ENCODE measurements at regions of chr10 and their contacts with region 1.

Region 1: GRCh38 chr10:112389147-112389822 is 15.4 kb downstream of the ACSL5 start:
- DNase-seq: peak; percentile 90
- H3K4me3 Mint-ChIP-seq: peak overlapping the region; percentile 32
- H3K27ac Mint-ChIP-seq: peak overlapping the region; percentile 85
- H3K4me1 Mint-ChIP-seq: peaks cover 70% of the 10 kb centered on the region
- H3K27me3 Mint-ChIP-seq: no peaks in the 10 kb centered on the region

Region 2: DNA sequence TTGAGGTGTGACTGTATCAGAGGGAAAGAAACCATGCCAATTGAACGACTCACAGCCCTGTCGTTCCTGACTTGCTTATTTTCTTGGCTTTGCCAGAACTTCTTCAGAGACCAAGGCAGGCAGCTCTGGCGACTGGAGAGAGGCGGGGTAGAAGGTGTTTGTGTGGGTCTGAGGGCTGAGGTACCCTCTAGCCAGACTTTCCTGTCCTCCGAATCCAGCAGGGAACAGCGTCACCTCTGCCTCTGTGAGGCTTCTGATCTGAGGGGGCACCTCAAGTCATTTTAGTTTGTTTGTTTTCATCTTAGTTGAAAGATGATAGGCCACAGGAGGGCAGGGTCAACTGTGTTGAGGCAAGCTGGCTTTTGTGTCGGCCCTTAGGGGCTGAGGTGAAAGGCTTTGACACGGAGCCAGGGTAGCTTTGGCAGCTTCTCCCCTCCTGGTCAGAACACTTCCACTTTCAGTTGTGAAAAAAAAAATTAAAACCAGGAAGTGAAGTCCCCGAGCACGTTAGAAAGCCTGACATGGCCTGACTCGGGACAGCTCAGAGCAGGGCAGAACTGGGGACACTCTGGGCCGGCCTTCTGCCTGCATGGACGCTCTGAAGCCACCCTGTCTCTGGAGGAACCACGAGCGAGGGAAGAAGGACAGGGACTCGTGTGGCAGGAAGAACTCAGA is 13.4 kb before region 1 on chr10:
- CTCF ChIA-PET with region 1: interaction called, 8 read pairs
- intact Hi-C with region 1: loop called (anchors 1 kb)
- DNase-seq: peak; percentile 49
- H3K4me3 Mint-ChIP-seq: peak overlapping the region; percentile 97
- H3K27ac Mint-ChIP-seq: peak overlapping the region; percentile 99
- H3K4me1 Mint-ChIP-seq: peaks cover 55% of the 10 kb centered on the region
- H3K27me3 Mint-ChIP-seq: no peaks in the 10 kb centered on the region

Region 3: GRCh38 chr10:112461029-112461887 is 72.0 kb after region 1 on chr10:
- CTCF ChIA-PET with region 1: no interaction called
- intact Hi-C with region 1: loop called (anchors 1 kb)
- DNase-seq: peak; percentile 90
- H3K4me3 Mint-ChIP-seq: no peak overlapping the region
- H3K27ac Mint-ChIP-seq: peak overlapping the region; percentile 95
- H3K4me1 Mint-ChIP-seq: peaks cover 23% of the 10 kb centered on the region
- H3K27me3 Mint-ChIP-seq: no peaks in the 10 kb centered on the region

Region 4: DNA sequence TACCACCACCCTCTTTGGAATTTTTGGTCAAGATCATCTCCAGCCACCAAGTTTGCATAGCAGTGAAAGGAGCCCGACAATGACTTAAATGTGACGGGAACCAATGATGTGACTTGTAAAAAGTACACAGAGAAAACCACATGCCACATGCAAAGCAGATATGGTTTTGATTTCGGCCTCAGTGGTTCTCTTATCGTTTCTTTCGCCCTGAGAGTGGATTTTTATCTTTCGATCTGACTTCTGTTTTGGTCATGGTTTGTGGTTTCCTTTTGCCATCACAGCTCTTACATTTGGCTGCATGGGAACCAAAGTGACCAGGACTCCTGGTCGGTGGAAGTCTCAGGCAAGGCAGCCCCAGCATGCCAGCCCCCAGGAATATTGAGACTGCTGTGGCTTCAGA is 592.3 kb after region 1 on chr10:
- CTCF ChIA-PET with region 1: no interaction called
- intact Hi-C with region 1: loop called (anchors 10 kb)
- DNase-seq: peak; percentile 73
- H3K4me3 Mint-ChIP-seq: no peak overlapping the region
- H3K27ac Mint-ChIP-seq: no peak overlapping the region
- H3K4me1 Mint-ChIP-seq: peaks cover 24% of the 10 kb centered on the region
- H3K27me3 Mint-ChIP-seq: peaks cover 61% of the 10 kb centered on the region

Measured in activated naive CD4-positive, alpha-beta T cell treated with anti-CD3 and anti-CD28 coated beads for 36 hours (primary cell).